AG04449 (cell line): ENCODE measurements at regions of chr5 and their contacts with region 1.

Region 1: DNA sequence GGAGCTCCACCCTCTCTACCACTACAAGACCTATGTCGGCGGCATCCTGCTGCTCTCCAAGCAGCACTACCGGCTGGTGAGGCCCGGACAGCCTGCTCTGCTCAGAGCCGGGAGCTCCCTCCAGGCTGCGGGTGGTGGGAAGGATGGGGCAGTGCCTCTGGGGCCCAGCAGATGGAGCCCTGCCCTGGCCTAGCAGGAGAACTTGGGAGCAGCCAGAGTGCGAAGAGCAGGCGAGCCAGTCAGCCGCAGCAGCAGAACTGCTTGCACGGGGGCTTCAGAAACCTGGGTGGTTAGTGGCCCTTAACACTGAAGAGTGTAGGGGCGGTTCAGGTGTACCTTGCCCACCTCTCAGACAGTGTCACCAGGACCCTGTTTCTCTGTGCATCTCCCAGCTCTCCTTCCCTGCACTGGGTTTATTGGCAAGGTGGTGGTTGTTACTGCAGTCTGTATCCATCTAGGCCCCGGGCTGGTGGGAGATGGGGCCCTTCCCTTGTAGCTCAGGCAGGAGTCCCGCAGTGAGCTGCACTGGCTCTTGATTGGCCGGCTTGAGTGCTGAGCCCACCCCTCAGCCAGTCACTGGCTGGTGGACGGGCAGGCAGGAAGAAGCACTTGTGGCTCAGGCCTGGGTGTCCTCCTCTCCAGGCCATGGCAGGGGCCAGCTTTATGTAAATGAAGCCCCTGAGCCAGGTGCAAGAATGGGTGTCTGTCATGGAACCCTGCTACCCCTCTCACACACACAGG is 7.7 kb downstream of the B4GALT7 start:
- DNase-seq: no peak
- H3K4me3 ChIP-seq: no peak overlapping the region
- CTCF ChIP-seq: peak; percentile 98

Region 2: GRCh38 chr5:177592010-177592834 is 15.4 kb before region 1 on chr5 and contains the start of gene TMED9:
- CTCF ChIA-PET with region 1: interaction called, 16 read pairs
- POLR2A ChIA-PET with region 1: interaction called, 3 read pairs
- DNase-seq: no peak
- H3K4me3 ChIP-seq: peak within 1 kb of the TSS; percentile 98
- CTCF ChIP-seq: no peak

Region 3: DNA sequence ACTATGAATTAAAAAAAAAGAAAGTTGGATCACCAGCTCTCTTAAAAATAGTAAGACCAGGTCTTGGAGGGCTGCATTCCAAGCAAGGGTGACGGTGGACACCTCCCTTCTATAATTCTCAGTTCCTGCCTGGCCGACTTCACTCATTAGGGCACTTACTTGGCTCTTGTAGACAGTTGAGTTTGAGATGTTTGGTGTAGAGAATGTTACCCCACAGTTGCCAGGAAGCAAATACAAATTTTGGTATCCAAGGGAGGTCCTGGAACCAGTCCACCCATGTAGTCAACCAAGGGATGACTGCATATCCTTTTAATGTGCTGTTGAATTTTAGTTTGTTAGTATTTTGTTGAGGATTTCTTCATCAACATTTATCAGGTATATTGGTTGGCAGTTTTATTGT is 12.9 kb after region 1 on chr5:
- CTCF ChIA-PET with region 1: interaction called, 29 read pairs
- POLR2A ChIA-PET with region 1: no interaction called
- DNase-seq: no peak
- H3K4me3 ChIP-seq: no peak overlapping the region
- CTCF ChIP-seq: no peak